CD8-positive, alpha-beta T cell (primary cell): ENCODE measurements at regions of chrX and their contacts with region 1.

Region 1: DNA sequence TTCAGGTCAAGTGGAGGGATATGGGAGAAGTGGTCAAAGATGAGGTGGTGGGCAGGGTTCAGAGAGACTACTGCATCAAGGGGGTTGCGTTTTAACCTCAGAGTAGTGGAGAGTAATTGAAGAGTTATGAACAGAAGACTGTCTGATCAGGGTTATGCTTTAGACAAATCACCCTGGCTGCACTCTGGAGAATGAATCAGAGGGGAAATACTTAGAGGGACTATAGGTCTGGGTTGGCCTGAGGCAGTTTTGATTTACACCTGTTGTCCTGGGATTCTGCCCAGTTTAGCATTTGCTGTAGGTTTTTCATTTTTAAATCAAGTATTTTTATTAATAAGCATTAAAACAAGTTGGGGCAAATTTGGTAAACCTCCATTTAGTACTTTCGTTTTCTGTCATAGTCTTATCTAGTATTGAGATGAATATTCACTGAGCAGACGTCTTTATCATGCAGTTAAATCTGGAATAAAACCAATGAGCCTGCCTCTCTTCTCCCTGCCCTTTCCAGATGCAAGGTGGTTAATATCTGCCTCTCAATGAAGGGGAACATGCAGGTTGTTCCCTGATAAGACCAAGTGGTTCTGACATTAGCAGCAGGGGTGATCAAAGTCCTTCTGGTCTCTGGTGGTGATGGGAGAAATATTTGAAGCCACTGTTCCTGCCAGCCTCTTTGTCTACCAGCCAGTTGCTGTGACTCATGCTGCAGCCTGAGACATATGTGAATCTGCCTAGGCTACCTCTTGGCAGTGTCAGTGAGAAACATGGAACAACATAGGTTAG is 116.0 kb upstream of the RPS6KA3 start:
- DNase-seq: peak in 3 of 9 experiments; percentile 2 to 18 (median 13)
- ATAC-seq: no peak
- H3K4me3 ChIP-seq: no peak overlapping the region
- H3K4me3 Mint-ChIP-seq: peak overlapping the region; percentile 58
- H3K27ac ChIP-seq: no peak overlapping the region
- H3K27ac Mint-ChIP-seq: peak overlapping the region; percentile 61
- H3K4me1 ChIP-seq: peaks cover 6% of the 10 kb centered on the region
- H3K4me1 Mint-ChIP-seq: peaks cover 16% of the 10 kb centered on the region
- H3K27me3 ChIP-seq: no peaks in the 10 kb centered on the region
- H3K27me3 Mint-ChIP-seq: no peaks in the 10 kb centered on the region
- CTCF ChIP-seq: no peak

Region 2: GRCh38 chrX:20442597-20442996 is 59.9 kb after region 1 on chrX:
- CTCF ChIA-PET with region 1: interaction called, 5 read pairs
- POLR2A ChIA-PET with region 1: no interaction called
- intact Hi-C with region 1: loop called (anchors 1 to 2 kb)
- DNase-seq: peak; percentile 64 to 89 (median 87)
- ATAC-seq: peak; percentile 70
- H3K4me3 ChIP-seq: no peak overlapping the region
- H3K4me3 Mint-ChIP-seq: no peak overlapping the region
- H3K27ac ChIP-seq: no peak overlapping the region
- H3K27ac Mint-ChIP-seq: no peak overlapping the region
- H3K4me1 ChIP-seq: peaks cover 63% of the 10 kb centered on the region
- H3K4me1 Mint-ChIP-seq: peaks cover 58% of the 10 kb centered on the region
- H3K27me3 ChIP-seq: no peaks in the 10 kb centered on the region
- H3K27me3 Mint-ChIP-seq: no peaks in the 10 kb centered on the region
- CTCF ChIP-seq: peak; percentile 63